ENCODE measurements at regions of chr11 and their contacts with region 1.

Region 1: DNA sequence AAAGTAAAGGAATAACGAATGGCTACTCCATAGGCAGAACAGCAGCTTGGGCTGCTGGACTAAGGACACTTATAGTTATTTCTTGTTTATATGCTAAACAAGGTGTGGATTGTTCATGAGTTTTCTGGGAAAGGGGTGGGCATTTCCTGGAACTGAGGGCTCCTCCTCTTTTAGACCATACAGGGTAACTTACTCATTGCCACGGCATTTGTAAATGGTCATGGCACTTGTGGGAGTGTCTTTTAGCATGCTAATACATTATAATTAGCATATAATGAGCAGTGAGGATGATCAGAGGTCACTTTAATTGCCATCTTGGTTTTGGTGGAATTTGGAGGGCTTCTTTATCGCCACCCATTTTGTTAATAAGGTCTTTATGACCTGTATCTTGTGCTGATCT is 7.0 kb downstream of the OR4X1 start:
- DNase-seq: no peak
- ATAC-seq: no peak
- H3K4me3 ChIP-seq: no peak overlapping the region
- H3K27ac ChIP-seq: no peak overlapping the region
- H3K4me1 ChIP-seq: no peaks in the 10 kb centered on the region
- H3K27me3 ChIP-seq: no peaks in the 10 kb centered on the region
- CTCF ChIP-seq: no peak
- POLR2A ChIP-seq: no peak

Region 2: GRCh38 chr11:47686151-47686550 is 584.5 kb before region 1 on chr11:
- intact Hi-C with region 1: no loop called
- DNase-seq: no peak
- ATAC-seq: no peak
- H3K4me3 ChIP-seq: no peak overlapping the region
- H3K27ac ChIP-seq: no peak overlapping the region
- H3K4me1 ChIP-seq: no peaks in the 10 kb centered on the region
- H3K27me3 ChIP-seq: no peaks in the 10 kb centered on the region
- CTCF ChIP-seq: no peak
- POLR2A ChIP-seq: no peak

Region 3: DNA sequence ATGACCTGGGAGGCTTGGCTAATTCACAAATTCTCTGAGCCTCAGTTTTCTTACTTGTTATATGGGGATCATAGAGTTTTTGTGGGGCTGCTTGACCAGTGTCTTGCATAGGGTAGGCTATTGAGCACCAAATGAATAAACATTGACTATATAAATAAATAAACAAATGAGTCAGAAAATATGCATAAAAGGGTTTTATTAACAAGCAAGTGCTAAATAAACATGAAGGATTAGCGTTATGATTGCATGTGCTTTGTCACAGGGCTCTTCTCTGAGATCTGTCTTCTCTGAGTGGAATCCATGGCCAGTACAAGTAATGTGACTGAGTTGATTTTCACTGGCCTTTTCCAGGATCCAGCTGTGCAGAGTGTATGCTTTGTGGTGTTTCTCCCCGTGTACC is 54.1 kb before region 1 on chr11 and contains the start of gene OR4B1:
- intact Hi-C with region 1: loop called in 1 of 10 experiments (anchors 5 kb)
- DNase-seq: no peak
- ATAC-seq: no peak
- H3K4me3 ChIP-seq: no peak within 1 kb of the TSS
- H3K27ac ChIP-seq: no peak within 1 kb of the TSS
- H3K4me1 ChIP-seq: no peaks in the 10 kb centered on the region
- H3K27me3 ChIP-seq: no peaks in the 10 kb centered on the region
- CTCF ChIP-seq: no peak
- POLR2A ChIP-seq: no peak
- total RNA-seq, gene OR4B1: not detected

Region 4: DNA sequence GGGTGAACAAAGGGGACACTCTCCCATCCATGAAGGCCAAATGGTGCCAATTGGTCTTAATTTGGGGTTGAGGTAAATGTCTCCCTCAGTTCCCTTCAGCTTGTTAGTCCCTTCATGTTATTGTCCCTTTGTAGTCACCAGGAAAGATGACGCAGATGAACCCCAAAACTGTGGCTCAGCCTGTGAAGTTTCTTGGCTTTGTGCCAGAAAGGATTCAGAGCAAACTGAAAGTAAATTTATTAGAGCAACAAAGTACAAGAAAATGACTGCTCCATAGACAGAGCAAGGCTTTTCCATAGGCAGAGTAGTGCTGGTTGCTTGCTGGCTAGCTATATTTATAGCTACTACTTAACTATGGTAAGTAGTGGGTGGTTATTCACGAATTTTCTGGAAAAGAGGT is 70.8 kb after region 1 on chr11:
- intact Hi-C with region 1: no loop called
- DNase-seq: no peak
- ATAC-seq: no peak
- H3K4me3 ChIP-seq: no peak overlapping the region
- H3K27ac ChIP-seq: no peak overlapping the region
- H3K4me1 ChIP-seq: no peaks in the 10 kb centered on the region
- H3K27me3 ChIP-seq: no peaks in the 10 kb centered on the region
- CTCF ChIP-seq: no peak
- POLR2A ChIP-seq: no peak